ENCODE measurements at regions of chr1 and their contacts with region 1.

Region 1: DNA sequence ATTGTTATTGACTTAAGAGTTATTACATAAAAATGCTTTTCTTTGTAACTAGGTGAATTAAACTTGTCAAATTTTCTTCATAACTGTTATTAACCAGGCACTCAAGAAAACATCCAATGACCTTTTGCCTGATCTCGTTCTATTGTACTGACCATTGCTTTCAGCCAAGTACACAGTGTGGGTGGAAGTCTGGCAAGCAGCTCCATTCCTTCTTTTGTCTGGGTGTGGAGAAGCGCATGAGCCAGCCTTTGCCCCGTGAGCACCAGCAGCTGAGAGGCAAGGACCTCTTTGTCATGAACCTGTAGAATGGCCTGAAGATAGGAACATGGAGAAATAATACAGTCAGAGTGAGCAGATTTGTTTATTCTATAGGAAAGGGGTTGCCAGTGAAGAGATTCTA is 57.5 kb downstream of the IARS2 start:
- DNase-seq: peak; percentile 25
- H3K4me3 Mint-ChIP-seq: no peak overlapping the region
- H3K27ac Mint-ChIP-seq: no peak overlapping the region
- H3K4me1 Mint-ChIP-seq: no peaks in the 10 kb centered on the region
- H3K27me3 Mint-ChIP-seq: no peaks in the 10 kb centered on the region
- CTCF ChIP-seq: no peak

Region 2: DNA sequence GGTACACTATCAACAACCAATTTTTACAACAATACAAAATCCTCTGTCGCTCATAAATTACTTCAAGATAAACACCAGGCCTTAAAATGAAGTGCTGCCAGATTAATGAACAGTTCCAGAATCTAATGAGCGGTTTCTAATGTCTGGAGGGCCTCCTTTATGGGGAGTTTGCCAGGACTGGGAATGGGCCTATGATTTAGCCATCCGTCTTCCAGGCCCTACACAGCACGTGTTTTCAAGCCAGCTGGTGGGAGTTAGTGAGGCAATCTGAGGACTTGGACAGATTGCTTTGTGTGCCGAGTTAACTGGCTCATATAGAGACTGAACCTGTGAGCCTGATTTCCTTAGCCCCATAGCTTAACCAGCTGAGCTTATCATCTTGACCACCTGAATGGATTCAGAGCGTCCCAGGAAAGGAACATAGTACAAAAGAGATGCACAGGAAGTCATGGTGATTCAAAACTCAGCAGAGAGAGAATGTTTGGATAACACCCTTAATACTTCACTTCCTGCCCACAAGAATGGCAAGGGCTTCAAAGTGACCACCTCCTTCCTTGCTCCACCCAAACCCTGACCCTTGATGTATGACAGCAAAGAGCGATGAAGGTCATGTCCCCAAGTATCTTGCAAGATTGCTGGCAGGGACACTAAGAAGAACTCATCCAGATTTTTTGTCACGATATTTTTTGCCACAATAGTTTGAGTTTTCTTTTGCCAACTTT is 366.6 kb before region 1 on chr1:
- CTCF ChIA-PET with region 1: no interaction called
- POLR2A ChIA-PET with region 1: no interaction called
- intact Hi-C with region 1: no loop called
- DNase-seq: no peak
- H3K4me3 Mint-ChIP-seq: no peak overlapping the region
- H3K27ac Mint-ChIP-seq: no peak overlapping the region
- H3K4me1 Mint-ChIP-seq: no peaks in the 10 kb centered on the region
- H3K27me3 Mint-ChIP-seq: peaks cover 47% of the 10 kb centered on the region
- CTCF ChIP-seq: no peak

Region 3: GRCh38 chr1:220164116-220164515 is 12.7 kb after region 1 on chr1:
- CTCF ChIA-PET with region 1: interaction called, 6 read pairs
- POLR2A ChIA-PET with region 1: interaction called, 23 read pairs
- intact Hi-C with region 1: no loop called
- DNase-seq: no peak
- H3K4me3 Mint-ChIP-seq: no peak overlapping the region
- H3K27ac Mint-ChIP-seq: no peak overlapping the region
- H3K4me1 Mint-ChIP-seq: no peaks in the 10 kb centered on the region
- H3K27me3 Mint-ChIP-seq: no peaks in the 10 kb centered on the region
- CTCF ChIP-seq: no peak